ENCODE measurements at regions of chr7 and their contacts with region 1.

Region 1: DNA sequence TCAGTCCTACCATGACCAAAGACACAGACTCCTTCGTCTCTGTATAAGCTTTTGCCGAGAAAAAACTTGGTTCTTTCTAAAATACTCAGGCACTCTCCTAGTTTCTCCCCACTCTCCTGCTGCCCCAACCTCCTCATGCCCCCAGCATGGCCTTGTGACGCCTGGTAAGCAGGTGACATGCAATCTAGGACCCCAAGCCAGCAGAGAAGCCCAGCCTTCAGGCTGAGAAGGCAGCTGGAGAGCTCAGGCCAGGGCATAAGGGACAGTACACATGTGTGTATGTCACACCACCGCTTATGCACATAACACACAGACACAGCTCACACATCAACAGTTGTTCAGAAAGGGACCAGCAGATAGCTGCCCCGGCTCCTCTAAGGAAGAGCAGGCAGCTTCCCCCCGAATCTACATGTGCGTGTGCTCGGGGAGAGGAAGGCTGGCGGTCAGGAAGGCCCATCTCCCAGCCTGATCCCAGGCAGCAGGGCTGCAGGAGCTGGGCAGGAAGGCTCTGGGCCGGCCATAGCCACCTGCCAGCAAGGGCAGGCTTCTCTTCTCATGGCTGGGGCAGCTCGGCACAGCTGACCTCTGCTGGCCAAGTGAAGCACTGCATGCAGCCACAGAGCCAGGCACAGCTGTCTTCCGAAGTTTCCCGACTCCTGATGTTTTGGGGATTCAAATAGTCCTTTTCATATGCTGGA is 8.5 kb downstream of the DDX56 start:
- DNase-seq: no peak
- H3K4me3 ChIP-seq: no peak overlapping the region
- CTCF ChIP-seq: peak; percentile 97

Region 2: DNA sequence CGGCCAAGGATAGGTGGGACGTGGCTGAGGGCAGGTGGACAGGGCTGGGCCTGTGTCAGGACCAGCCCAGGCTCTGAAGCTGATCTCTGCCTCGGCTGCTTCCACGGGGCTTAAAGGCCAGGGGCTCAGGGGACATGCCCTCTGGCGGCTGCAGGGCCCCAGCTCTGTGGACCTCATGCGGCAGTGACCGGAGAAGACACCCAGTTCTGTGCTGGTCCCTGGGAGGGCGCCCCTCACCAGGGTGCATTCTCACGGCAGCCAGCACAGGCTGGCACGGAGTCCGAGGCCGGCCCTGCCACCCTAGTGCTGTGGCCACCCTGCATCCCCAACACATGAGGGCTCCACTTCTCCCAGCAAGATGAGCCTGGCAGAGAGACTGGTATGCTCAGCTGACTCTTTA is 334.2 kb before region 1 on chr7:
- CTCF ChIA-PET with region 1: interaction called, 10 read pairs
- POLR2A ChIA-PET with region 1: no interaction called
- DNase-seq: no peak
- H3K4me3 ChIP-seq: no peak overlapping the region
- CTCF ChIP-seq: no peak

Region 3: DNA sequence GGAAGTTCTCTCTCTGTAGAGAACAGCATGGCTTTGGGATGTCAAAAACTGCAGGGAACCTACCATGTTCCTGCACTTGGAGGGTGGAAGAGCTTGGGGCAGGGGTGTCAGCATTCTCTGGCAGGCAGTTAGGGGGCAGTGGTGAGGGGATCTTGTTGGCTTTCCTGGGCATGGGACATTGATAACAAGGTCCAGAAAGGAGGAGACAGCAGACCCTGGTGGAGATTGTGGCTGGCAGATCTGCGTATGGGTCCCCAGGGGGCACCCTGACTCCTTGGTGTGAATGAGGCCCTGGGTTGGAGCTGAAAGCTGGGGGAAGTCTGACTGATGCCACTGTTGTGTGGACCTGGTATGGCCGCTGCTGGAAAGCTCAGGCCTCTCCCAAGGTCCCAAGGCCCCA is 216.9 kb before region 1 on chr7:
- CTCF ChIA-PET with region 1: interaction called, 76 read pairs
- POLR2A ChIA-PET with region 1: no interaction called
- DNase-seq: no peak
- H3K4me3 ChIP-seq: no peak overlapping the region
- CTCF ChIP-seq: peak; percentile 65

Region 4: GRCh38 chr7:44490351-44491200 is 74.7 kb before region 1 on chr7 and contains the start of gene NUDCD3:
- CTCF ChIA-PET with region 1: interaction called, 11 read pairs
- POLR2A ChIA-PET with region 1: no interaction called
- DNase-seq: no peak
- H3K4me3 ChIP-seq: peak within 1 kb of the TSS; percentile 97
- CTCF ChIP-seq: no peak

Region 5: DNA sequence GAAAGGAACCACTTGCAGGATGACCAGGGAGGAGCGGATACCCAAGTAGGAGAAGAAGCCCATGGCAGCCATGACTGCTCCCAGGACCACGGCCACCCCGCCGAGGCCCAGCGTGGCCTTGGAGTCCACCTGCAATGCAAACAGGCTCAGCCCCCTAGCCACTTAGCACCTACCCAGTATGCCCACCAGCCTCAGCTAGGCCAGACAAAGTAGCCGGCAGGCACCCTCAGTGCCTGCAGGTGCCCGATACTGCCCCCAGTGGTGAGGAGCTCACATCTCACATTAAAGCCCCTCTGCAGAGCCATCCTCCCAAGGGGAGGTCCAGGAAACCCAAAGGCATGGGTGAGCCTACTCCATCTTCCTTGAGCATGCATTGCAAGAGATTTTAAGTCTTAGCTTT is 30.7 kb before region 1 on chr7:
- CTCF ChIA-PET with region 1: interaction called, 11 read pairs
- POLR2A ChIA-PET with region 1: no interaction called
- DNase-seq: no peak
- H3K4me3 ChIP-seq: no peak overlapping the region
- CTCF ChIP-seq: peak; percentile 29

Region 6: DNA sequence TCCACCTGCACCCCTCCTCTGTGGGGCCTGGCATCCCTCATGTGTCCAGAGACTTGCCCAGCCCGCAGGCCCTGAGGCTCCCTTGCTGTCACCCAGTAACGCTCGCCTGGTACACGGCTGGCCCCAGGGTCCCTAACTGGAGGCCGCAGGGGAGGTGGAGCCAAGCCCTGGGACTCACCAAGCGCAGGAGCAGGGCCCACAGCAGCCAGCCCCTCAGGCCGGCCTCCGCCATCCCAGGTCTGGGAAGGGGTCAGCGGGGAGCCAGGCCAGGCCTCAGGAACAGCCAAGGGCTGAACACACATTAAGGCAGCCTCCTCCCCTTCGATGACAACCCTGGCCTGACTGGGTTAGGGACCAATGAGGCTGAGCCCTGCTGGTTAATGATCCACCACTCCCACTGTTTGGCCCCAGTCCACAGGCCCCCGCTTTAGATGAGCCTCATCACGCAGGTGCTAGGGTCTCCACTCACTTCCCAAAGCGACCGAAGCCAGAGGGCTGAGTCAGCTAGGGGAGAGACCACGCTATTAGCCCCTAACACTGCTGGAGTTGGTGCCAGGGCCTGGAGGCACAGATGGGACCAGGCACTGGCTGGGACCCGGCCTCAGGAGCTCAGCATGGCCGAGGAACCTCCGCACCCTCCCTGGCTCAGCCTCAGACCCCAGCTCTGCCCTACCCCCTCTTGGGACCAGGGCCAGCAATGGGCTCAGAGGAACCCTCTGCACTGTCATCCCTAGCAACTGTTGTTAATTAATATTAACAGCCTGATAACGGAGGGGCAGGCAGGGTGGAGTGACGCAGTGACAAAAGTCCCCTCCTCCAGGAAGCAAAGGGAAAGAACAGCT is 24.0 kb before region 1 on chr7 and contains the start of gene NPC1L1:
- CTCF ChIA-PET with region 1: interaction called, 28 read pairs
- POLR2A ChIA-PET with region 1: no interaction called
- DNase-seq: no peak
- H3K4me3 ChIP-seq: no peak within 1 kb of the TSS
- CTCF ChIP-seq: no peak

Region 7: DNA sequence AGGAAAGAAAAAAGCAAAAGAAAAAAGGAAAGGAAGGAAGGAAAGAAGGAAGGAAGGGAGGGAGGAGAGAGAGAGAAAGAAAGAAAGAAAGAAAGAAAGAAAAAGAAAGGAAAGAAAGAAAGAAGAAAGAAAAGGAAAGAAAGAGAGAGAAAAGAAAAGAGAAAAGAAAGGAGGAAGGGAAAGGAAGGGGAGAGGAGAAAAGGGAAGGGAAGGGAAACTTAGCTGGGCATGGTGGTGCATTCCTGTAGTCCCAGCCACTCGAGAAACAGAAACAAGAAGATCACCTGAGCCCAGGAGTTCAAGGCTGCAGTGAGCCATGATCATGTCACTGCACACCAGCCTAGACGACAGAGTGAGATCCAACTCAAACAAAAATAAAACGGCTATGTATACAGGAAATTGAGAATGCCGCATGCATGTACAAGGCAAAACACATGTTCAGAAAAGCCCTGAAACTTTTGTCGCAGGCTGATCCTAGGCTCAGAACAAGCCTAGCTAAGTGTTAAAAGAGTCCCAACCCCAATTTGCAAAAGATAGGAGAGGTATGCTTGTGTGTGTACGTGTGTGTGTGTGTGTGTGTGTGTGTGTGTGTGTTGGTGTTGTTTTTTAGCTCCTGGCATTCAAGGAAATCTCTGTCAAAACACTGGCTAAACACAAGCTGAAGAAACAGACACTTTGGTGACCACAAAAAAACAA is 17.6 kb before region 1 on chr7:
- CTCF ChIA-PET with region 1: interaction called, 28 read pairs
- POLR2A ChIA-PET with region 1: no interaction called
- DNase-seq: no peak
- H3K4me3 ChIP-seq: no peak overlapping the region
- CTCF ChIP-seq: no peak

Measured in AG04449 (cell line).